Lower leg skin (tissue), 4 donors: ENCODE measurements at regions of chr12 and their contacts with region 1.

Region 1: GRCh38 chr12:10838461-10838860 is 10.8 kb downstream of the PRR4 start:
- DNase-seq: no peak
- H3K4me3 ChIP-seq: no peak overlapping the region
- CTCF ChIP-seq: no peak
- POLR2A ChIP-seq: no peak

Region 2: DNA sequence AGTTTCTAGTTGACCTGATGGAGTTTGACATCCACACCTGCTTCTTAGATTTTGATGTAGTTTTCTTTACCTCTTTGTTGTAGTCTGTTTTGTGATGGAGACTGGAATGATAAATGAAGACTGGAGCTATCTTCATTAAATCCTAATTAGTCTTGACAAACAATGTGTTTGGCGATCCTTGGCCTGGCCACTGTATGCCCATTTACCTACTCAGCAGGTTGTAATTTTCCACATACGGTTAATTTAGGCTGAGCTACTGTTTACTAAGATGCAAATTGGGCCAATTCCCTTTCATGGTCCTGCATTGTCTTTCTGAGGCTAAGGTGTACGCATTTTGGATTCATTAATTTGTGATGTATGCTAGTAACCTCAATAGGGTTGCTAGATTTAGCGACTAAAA is 35.9 kb before region 1 on chr12 and contains the start of gene TAS2R7:
- intact Hi-C with region 1: loop called (anchors 2 kb)
- DNase-seq: no peak
- H3K4me3 ChIP-seq: no peak within 1 kb of the TSS
- CTCF ChIP-seq: no peak
- POLR2A ChIP-seq: no peak
- total RNA-seq, gene TAS2R7: not detected